ENCODE measurements at regions of chr6 and their contacts with region 1.

Region 1: DNA sequence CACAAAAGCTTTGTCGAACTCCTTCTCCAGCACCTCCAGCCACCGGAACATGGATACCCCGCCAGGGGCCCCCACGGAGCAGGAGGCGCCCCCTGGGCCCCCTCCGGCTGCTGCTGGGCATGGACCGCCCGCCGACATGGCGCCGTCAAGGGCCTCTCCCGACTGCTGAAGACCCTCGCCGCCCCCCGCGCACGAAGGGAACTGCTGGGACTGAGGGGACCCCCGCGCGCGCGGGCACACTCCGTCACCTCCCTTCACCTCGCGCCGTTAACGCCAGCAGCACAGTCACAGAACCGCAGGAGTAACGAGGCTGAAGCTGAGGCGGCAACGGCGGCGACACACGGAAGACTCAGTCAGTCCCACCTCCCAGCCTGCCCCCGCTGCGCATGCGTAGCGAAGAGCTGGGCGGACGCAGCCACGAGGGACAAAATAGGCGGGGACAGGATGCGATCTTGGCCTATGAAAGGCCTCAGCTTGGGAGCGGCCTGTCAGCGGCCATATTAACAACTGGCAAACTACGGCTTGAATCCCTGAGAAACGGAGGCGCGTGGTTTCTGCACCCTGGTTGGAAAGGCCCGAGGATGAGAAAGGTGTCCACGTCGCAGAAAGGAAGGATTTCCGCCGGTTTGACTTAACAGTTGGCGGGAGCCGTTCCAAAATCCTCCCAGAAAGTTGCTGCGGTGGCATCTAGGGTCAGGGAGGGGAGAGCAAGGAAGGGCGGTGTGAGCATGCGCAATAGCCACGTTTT is at the start of gene GOPC:
- DNase-seq: peak; percentile 96 to 98 (median 98)
- ATAC-seq: peak; percentile 99 to 100 (median 100)
- H3K4me3 ChIP-seq: peak within 1 kb of the TSS; percentile 74 to 99 (median 90)
- H3K27ac ChIP-seq: peak within 1 kb of the TSS; percentile 73 to 96 (median 92)
- H3K4me1 ChIP-seq: peaks cover 0 to 35% (median 27%) of the 10 kb centered on the region in 12 donors
- H3K27me3 ChIP-seq: no peaks in the 10 kb centered on the region
- CTCF ChIP-seq: peak in 5 of 12 donors; percentile 8 to 38 (median 15)
- POLR2A ChIP-seq: peak in 1 of 2 donors; percentile 86
- total RNA-seq, gene GOPC: 16.4 to 29.9 (median 21.5) TPM

Region 2: GRCh38 chr6:117025310-117025709 is 577.0 kb before region 1 on chr6:
- intact Hi-C with region 1: no loop called
- DNase-seq: no peak
- ATAC-seq: no peak
- H3K4me3 ChIP-seq: no peak overlapping the region
- H3K27ac ChIP-seq: no peak overlapping the region
- H3K4me1 ChIP-seq: no peaks in the 10 kb centered on the region
- H3K27me3 ChIP-seq: no peaks in the 10 kb centered on the region
- CTCF ChIP-seq: no peak
- POLR2A ChIP-seq: no peak

Region 3: GRCh38 chr6:117346142-117346930 is 256.0 kb before region 1 on chr6:
- intact Hi-C with region 1: loop called in 9 of 10 experiments (anchors 2 to 10 kb)
- DNase-seq: no peak
- ATAC-seq: no peak
- H3K4me3 ChIP-seq: peak overlapping the region in 3 of 12 donors; percentile 21 to 31 (median 27)
- H3K27ac ChIP-seq: no peak overlapping the region
- H3K4me1 ChIP-seq: no peaks in the 10 kb centered on the region
- H3K27me3 ChIP-seq: peaks cover 0 to 3% (median 0%) of the 10 kb centered on the region in 9 donors
- CTCF ChIP-seq: peak; percentile 30 to 66 (median 54)
- POLR2A ChIP-seq: no peak

Region 4: DNA sequence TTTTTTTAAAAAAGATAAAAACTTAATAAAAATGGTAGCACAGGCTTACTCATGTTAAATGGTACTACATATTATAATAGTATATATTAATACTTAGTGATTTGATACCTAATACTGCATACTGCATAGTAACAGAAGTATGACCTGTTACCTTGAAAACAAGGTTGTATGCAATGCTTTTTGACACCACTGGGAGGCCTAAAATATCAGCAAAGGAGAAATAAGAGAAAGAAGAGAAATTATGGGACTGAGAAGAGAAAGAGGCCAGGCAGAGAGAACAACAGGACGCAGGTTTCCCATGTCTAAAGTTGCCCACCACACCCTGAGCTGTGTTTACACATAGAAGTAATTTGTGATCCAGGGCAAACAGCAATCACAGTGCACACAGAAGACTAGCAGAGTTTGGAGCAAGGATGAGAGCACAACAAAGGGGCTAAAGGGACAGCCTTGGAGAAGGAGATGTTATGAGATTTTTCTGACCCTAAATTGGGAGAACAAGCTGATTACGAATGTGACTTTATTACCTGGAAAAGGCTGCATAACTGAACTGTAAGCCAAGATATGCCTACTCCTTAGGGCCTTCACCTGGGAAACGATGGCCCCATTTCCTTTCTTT is 249.8 kb before region 1 on chr6:
- intact Hi-C with region 1: loop called in 9 of 10 experiments (anchors 2 to 10 kb)
- DNase-seq: no peak
- ATAC-seq: no peak
- H3K4me3 ChIP-seq: no peak overlapping the region
- H3K27ac ChIP-seq: no peak overlapping the region
- H3K4me1 ChIP-seq: no peaks in the 10 kb centered on the region
- H3K27me3 ChIP-seq: no peaks in the 10 kb centered on the region
- CTCF ChIP-seq: peak in 9 of 12 donors; percentile 11 to 50 (median 23)
- POLR2A ChIP-seq: no peak

Region 5: GRCh38 chr6:117449549-117450439 is 152.5 kb before region 1 on chr6:
- intact Hi-C with region 1: loop called in 9 of 10 experiments (anchors 1 to 5 kb)
- DNase-seq: peak in 3 of 5 donors; percentile 41 to 45 (median 41)
- ATAC-seq: peak in 1 of 4 donors; percentile 28
- H3K4me3 ChIP-seq: no peak overlapping the region
- H3K27ac ChIP-seq: no peak overlapping the region
- H3K4me1 ChIP-seq: peaks cover 0 to 9% (median 0%) of the 10 kb centered on the region in 12 donors
- H3K27me3 ChIP-seq: peaks cover 0 to 18% (median 4%) of the 10 kb centered on the region in 9 donors
- CTCF ChIP-seq: peak; percentile 66 to 86 (median 78)
- POLR2A ChIP-seq: no peak

Region 6: DNA sequence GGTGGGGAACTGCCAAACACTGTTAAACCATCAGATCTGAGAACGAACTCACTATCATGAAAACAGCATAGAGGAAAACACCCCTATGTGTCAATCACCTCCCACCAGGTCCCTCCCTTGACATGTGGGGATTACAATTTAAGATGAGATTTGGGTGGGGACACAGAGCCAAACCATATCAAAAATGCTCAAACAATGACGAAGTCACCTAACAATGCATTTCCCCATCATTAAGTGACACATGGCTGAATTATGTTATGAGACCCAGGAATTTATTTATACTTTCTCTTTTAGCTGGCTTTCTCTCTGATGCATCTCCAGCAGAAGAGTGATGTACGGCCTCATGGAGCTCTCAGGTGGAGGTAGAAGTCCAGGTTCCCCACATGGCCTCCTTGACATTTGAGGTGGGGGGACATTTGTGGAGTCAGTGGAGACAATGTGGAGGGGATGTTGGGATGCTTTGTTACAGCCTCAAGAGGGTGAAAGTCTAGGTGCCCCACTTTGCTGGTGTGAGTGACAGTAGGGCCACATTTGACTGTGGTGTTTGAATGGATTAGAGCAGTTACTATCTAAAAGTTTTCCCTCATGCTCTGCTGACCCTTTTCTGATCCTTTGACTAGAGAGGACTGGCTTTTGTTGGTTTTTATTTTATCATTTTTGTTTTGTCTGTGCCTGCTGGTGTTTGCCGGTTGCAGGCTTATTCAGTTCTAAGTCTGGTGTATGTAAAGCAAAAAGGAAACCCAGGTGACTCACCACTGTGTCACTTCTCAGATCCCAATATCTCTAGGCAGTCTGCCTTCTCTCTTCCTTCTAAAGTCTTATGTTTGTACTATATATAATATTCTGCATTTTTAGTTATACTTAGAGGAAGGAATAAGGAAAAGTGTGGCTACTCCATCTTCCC is 138.3 kb before region 1 on chr6:
- intact Hi-C with region 1: no loop called
- DNase-seq: no peak
- ATAC-seq: no peak
- H3K4me3 ChIP-seq: no peak overlapping the region
- H3K27ac ChIP-seq: no peak overlapping the region
- H3K4me1 ChIP-seq: no peaks in the 10 kb centered on the region
- H3K27me3 ChIP-seq: no peaks in the 10 kb centered on the region
- CTCF ChIP-seq: no peak
- POLR2A ChIP-seq: no peak

Region 7: GRCh38 chr6:117482240-117483003 is 119.9 kb before region 1 on chr6 and contains the start of gene DCBLD1:
- intact Hi-C with region 1: loop called in 1 of 10 experiments (anchors 10 kb)
- DNase-seq: peak; percentile 80 to 91 (median 84)
- ATAC-seq: peak; percentile 82 to 97 (median 92)
- H3K4me3 ChIP-seq: peak within 1 kb of the TSS; percentile 62 to 88 (median 78)
- H3K27ac ChIP-seq: peak within 1 kb of the TSS; percentile 19 to 92 (median 84)
- H3K4me1 ChIP-seq: peaks cover 0 to 40% (median 15%) of the 10 kb centered on the region in 12 donors
- H3K27me3 ChIP-seq: peaks cover 0 to 5% (median 0%) of the 10 kb centered on the region in 9 donors
- CTCF ChIP-seq: peak in 2 of 12 donors; percentile 15 to 16
- POLR2A ChIP-seq: peak in 1 of 2 donors; percentile 66
- total RNA-seq, gene DCBLD1: 3.1 to 11.4 (median 4.1) TPM

Region 8: DNA sequence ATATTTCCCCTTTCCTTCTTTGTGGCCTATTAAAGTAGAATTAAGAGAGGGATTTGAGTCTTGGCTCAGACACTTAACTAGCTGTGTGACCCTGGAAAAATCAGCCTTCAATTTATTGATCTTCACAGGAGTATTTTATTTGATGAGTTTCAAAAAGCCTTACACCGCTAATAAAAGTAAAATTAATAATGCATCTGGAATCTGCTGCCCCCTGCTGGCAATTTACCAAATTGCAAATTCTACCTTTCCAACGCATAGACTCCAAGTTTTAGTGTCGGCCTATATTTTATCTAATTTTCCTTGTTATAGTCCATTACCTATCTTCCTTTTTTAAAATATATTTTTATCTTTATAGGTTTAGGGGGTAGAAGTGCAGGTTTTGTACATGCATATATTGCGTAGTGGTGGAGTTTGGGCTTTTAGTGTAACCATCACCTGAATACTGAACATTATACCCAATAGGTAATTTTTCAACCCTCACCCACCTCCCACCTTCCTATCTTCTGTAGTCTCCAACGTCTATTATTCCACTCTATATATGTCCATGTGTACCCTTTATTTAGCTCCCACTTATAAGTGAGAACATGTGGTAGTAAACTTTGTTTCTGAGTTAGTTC is 46.3 kb before region 1 on chr6:
- intact Hi-C with region 1: loop called in 3 of 10 experiments (anchors 5 kb)
- DNase-seq: peak in 2 of 5 donors; percentile 33 to 35
- ATAC-seq: peak in 1 of 4 donors; percentile 28
- H3K4me3 ChIP-seq: no peak overlapping the region
- H3K27ac ChIP-seq: no peak overlapping the region
- H3K4me1 ChIP-seq: peaks cover 0 to 8% (median 0%) of the 10 kb centered on the region in 12 donors
- H3K27me3 ChIP-seq: no peaks in the 10 kb centered on the region
- CTCF ChIP-seq: peak; percentile 74 to 97 (median 91)
- POLR2A ChIP-seq: no peak

Region 9: GRCh38 chr6:117674991-117675657 is 72.8 kb after region 1 on chr6 and contains the start of gene NUS1:
- intact Hi-C with region 1: loop called in 2 of 10 experiments (anchors 5 kb)
- DNase-seq: peak; percentile 97 to 98 (median 98)
- ATAC-seq: peak; percentile 99 to 100 (median 100)
- H3K4me3 ChIP-seq: peak within 1 kb of the TSS; percentile 62 to 88 (median 76)
- H3K27ac ChIP-seq: peak within 1 kb of the TSS in 11 of 12 donors; percentile 70 to 84 (median 76)
- H3K4me1 ChIP-seq: peaks cover 5 to 50% (median 21%) of the 10 kb centered on the region in 12 donors
- H3K27me3 ChIP-seq: no peaks in the 10 kb centered on the region
- CTCF ChIP-seq: peak; percentile 57 to 95 (median 80)
- POLR2A ChIP-seq: peak in 1 of 2 donors; percentile 44
- total RNA-seq, gene NUS1: 8.1 to 20.1 (median 14.7) TPM